Dorsolateral prefrontal cortex (tissue), 120 donors: ENCODE measurements at regions of chr6 and their contacts with region 1.

Region 1: GRCh38 chr6:34154668-34155447 is 9.0 kb upstream of the GRM4 start:
- DNase-seq: peak in 9 of 10 donors; percentile 30 to 79 (median 50)
- H3K4me3 ChIP-seq: peak overlapping the region in 53 of 59 donors; percentile 8 to 61 (median 40)
- H3K27ac ChIP-seq: no peak overlapping the region
- H3K27me3 ChIP-seq: peaks cover 0 to 49% (median 19%) of the 10 kb centered on the region in 45 donors
- CTCF ChIP-seq: peak; percentile 56 to 98 (median 94)

Region 2: DNA sequence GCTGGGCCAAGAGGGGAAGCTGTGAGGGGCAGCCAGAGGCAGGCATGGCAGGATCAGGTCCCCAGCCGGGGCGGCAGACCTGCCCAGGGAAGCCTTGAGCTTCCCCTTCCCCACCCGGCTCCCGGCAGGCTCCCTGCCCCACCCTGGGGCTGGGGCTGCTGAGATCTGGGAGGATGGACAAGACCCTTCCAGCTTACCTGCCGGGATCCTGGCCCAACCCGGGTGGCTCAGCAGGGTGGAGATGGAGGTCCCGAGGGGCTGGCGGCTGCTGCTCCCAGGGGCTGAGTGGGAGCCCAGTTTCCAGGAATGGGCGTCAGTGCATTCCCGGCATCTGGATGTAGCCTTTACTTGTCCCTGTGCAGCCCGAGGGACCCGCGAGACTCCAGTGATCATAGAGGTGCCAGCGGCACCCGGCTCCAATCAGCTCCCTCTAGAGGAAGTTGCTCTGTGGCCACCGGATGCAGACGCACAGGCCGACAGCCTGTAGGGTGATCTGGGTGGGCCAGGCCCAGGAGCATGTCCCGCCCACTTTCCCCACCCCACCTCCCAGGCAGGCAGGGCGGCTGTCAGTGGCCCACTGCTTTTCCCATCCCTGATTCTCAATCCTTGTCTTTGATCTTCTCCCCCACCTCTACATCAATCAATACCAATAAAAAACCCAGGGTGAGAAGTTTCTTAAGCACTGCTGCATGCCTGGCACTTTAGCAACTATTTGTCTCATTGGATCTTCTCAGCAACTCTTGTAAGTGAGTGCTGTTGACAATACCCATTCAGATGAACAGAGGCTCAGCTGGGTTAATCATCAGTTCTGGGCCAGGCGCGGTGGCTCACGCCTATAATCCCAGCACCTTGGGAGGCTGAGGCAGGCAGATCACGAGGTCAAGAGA is 574.8 kb before region 1 on chr6 and contains the start of gene BAK1:
- intact Hi-C with region 1: loop called in 1 of 2 experiments (anchors 10 kb)
- DNase-seq: peak; percentile 79 to 97 (median 94)
- H3K4me3 ChIP-seq: peak within 1 kb of the TSS; percentile 65 to 97 (median 86)
- H3K27ac ChIP-seq: peak within 1 kb of the TSS; percentile 31 to 96 (median 86)
- H3K27me3 ChIP-seq: no peaks in the 10 kb centered on the region
- CTCF ChIP-seq: peak; percentile 28 to 81 (median 66)
- total RNA-seq, gene BAK1: 6.4 to 17.0 (median 10.8) TPM

Region 3: GRCh38 chr6:33744001-33744848 is 410.6 kb before region 1 on chr6:
- intact Hi-C with region 1: loop called in 1 of 2 experiments (anchors 10 kb)
- DNase-seq: peak; percentile 69 to 83 (median 79)
- H3K4me3 ChIP-seq: peak overlapping the region in 47 of 59 donors; percentile 16 to 79 (median 58)
- H3K27ac ChIP-seq: peak overlapping the region in 52 of 59 donors; percentile 44 to 99 (median 94)
- H3K27me3 ChIP-seq: no peaks in the 10 kb centered on the region
- CTCF ChIP-seq: peak; percentile 61 to 94 (median 87)

Region 4: DNA sequence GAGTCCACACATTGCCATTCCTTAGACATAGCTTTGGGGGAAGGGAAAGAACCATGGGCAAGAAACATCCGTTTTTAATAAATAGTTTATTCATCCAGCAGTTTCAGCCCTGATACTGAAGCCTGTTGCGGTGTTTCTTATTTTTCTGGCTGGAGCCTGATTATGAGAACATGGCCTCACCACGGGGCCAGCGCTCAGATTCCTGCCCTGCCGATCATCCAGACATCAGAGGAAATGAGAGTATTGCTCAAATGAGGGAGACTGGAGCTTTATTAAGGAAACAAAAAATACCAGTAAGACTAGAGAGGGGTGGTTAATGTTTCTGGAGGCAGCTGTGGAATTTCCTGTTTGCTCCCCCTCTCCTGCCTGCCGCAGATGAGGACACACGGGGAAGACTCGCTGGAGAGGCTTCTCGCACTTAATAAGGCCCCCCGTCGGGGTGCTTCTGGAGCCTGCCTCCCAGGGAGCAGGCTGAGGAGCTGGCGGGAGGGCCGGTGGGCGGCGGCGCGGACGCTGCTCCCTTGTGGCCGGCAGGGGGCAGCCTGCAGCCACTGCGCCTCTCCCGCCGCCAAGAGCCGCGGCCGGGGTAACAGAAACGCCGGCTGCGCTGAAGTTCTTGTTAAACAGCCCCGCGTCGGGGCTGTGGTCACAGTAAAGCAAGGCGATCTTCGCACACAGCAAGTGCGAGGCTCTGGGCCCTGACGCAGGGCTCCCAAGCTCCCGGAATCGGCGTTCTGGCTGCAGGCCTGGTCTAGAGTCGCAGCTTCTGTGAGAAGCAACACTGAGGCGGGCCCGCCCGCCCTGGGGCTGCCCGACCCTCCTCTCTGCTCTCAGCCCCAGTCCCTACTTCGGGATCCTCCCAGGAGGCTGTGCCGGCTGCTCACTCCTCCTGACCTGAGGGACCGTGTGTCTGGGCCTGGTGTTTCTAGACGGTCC is 383.4 kb before region 1 on chr6:
- intact Hi-C with region 1: loop called (anchors 1 to 2 kb)
- DNase-seq: peak in 8 of 10 donors; percentile 32 to 83 (median 58)
- H3K4me3 ChIP-seq: peak overlapping the region in 11 of 59 donors; percentile 3 to 36 (median 15)
- H3K27ac ChIP-seq: peak overlapping the region in 53 of 59 donors; percentile 3 to 85 (median 61)
- H3K27me3 ChIP-seq: no peaks in the 10 kb centered on the region
- CTCF ChIP-seq: peak; percentile 72 to 98 (median 94)

Region 5: GRCh38 chr6:34055223-34055933 is 99.5 kb before region 1 on chr6:
- intact Hi-C with region 1: loop called (anchors 2 to 5 kb)
- DNase-seq: peak in 9 of 10 donors; percentile 37 to 73 (median 58)
- H3K4me3 ChIP-seq: no peak overlapping the region
- H3K27ac ChIP-seq: peak overlapping the region in 1 of 59 donors; percentile 74
- H3K27me3 ChIP-seq: peaks cover 0 to 4% (median 0%) of the 10 kb centered on the region in 45 donors
- CTCF ChIP-seq: peak; percentile 28 to 83 (median 72)

Region 6: GRCh38 chr6:34067814-34068213 is 87.0 kb before region 1 on chr6:
- intact Hi-C with region 1: no loop called
- DNase-seq: peak in 1 of 10 donors; percentile 56
- H3K4me3 ChIP-seq: no peak overlapping the region
- H3K27ac ChIP-seq: peak overlapping the region in 1 of 59 donors; percentile 93
- H3K27me3 ChIP-seq: peaks cover 0 to 50% (median 10%) of the 10 kb centered on the region in 45 donors
- CTCF ChIP-seq: no peak